CD4-positive, alpha-beta T cell (primary cell): ENCODE measurements at regions of chr16 and their contacts with region 1.

Region 1: GRCh38 chr16:53495325-53495724 is 7.7 kb downstream of the AKTIP start:
- DNase-seq: peak in 1 of 14 experiments; percentile 25
- ATAC-seq: no peak
- H3K4me3 ChIP-seq: no peak overlapping the region
- H3K4me3 Mint-ChIP-seq: no peak overlapping the region
- H3K27ac ChIP-seq: no peak overlapping the region
- H3K27ac Mint-ChIP-seq: peak overlapping the region; percentile 61
- H3K4me1 ChIP-seq: peaks cover 23% of the 10 kb centered on the region
- H3K4me1 Mint-ChIP-seq: peaks cover 80% of the 10 kb centered on the region
- H3K27me3 ChIP-seq: no peaks in the 10 kb centered on the region
- H3K27me3 Mint-ChIP-seq: no peaks in the 10 kb centered on the region
- CTCF ChIP-seq: no peak

Region 2: DNA sequence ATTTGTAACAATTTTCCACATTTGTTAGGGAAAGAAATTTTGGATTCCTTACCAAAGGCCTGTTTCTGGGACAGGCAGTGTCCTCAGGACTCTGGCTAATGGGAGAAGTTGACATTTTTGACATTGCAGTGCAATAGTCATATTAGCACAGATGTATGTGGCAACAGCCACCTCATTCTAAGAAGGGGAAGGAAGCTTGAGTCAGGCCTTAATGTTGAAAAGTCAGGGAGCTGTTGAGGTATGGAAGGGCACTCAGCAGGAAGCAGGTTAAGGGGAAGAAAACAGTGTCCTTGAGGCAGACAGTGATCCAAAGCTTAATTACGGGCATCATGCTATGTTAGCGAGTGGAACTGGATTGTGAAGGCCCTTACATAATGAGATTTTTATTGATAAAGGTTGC is 13.2 kb before region 1 on chr16:
- CTCF ChIA-PET with region 1: interaction called, 5 read pairs
- POLR2A ChIA-PET with region 1: interaction called, 4 read pairs
- intact Hi-C with region 1: loop called in 1 of 2 experiments (anchors 2 kb)
- DNase-seq: peak in 2 of 14 experiments; percentile 32 to 45
- ATAC-seq: no peak
- H3K4me3 ChIP-seq: no peak overlapping the region
- H3K4me3 Mint-ChIP-seq: no peak overlapping the region
- H3K27ac ChIP-seq: no peak overlapping the region
- H3K27ac Mint-ChIP-seq: peak overlapping the region; percentile 74
- H3K4me1 ChIP-seq: peaks cover 7% of the 10 kb centered on the region
- H3K4me1 Mint-ChIP-seq: peaks cover 62% of the 10 kb centered on the region
- H3K27me3 ChIP-seq: no peaks in the 10 kb centered on the region
- H3K27me3 Mint-ChIP-seq: no peaks in the 10 kb centered on the region
- CTCF ChIP-seq: no peak